Activated naive CD4-positive, alpha-beta T cell treated with anti-CD3 and anti-CD28 coated beads for 36 hours (primary cell): ENCODE measurements at regions of chr9 and their contacts with region 1.

Region 1: GRCh38 chr9:35603987-35604577 is 980 bp upstream of the TESK1 start:
- DNase-seq: peak; percentile 100
- H3K4me3 Mint-ChIP-seq: peak overlapping the region; percentile 98
- H3K27ac Mint-ChIP-seq: peak overlapping the region; percentile 97
- H3K4me1 Mint-ChIP-seq: peaks cover 27% of the 10 kb centered on the region
- H3K27me3 Mint-ChIP-seq: no peaks in the 10 kb centered on the region

Region 2: DNA sequence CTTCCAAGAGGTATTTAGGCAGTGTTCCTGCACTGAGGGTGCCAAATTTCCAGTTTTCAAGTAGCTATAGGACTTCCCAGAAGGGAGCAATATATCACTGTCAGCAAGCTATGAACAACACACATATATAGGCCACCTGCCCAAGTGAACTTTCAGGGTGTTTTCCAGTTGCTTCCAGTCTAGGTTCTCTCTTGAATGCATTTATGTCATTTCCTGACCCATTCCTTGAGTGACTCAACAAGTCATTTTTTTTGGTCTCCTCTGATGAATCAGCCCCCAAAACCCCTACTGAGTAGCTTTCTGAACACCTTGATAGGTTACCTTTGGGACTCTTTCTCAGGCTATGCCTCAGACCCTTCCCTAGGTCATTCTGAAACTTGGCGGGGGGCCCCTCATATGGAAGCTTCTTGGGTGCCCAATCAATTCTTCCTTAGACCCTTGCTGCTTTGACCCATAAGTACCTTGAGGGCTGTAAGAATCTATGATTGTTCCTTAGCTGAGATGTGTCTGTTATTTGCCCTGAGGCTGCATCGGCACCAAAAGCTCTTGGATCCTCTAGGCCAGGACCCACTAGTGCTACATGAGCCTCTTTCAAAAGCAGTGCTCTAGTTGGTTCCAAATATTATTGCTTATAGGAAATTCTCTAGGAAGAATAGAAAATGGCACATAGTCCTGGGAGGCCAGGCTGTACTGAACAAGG is 602.1 kb before region 1 on chr9:
- CTCF ChIA-PET with region 1: no interaction called
- intact Hi-C with region 1: loop called (anchors 1 kb)
- DNase-seq: peak; percentile 70
- H3K4me3 Mint-ChIP-seq: no peak overlapping the region
- H3K27ac Mint-ChIP-seq: peak overlapping the region; percentile 83
- H3K4me1 Mint-ChIP-seq: peaks cover 35% of the 10 kb centered on the region
- H3K27me3 Mint-ChIP-seq: no peaks in the 10 kb centered on the region

Region 3: GRCh38 chr9:35489313-35490154 is 114.5 kb before region 1 on chr9 and contains the start of gene RUSC2:
- CTCF ChIA-PET with region 1: no interaction called
- intact Hi-C with region 1: loop called (anchors 1 kb)
- DNase-seq: peak; percentile 79
- H3K4me3 Mint-ChIP-seq: peak within 1 kb of the TSS; percentile 85
- H3K27ac Mint-ChIP-seq: no peak within 1 kb of the TSS
- H3K4me1 Mint-ChIP-seq: peaks cover 26% of the 10 kb centered on the region
- H3K27me3 Mint-ChIP-seq: no peaks in the 10 kb centered on the region
- total RNA-seq, gene RUSC2: 4.0 to 5.1 TPM

Region 4: GRCh38 chr9:35510745-35511428 is 93.2 kb before region 1 on chr9:
- CTCF ChIA-PET with region 1: no interaction called
- intact Hi-C with region 1: no loop called
- DNase-seq: no peak
- H3K4me3 Mint-ChIP-seq: no peak overlapping the region
- H3K27ac Mint-ChIP-seq: no peak overlapping the region
- H3K4me1 Mint-ChIP-seq: no peaks in the 10 kb centered on the region
- H3K27me3 Mint-ChIP-seq: no peaks in the 10 kb centered on the region

Region 5: GRCh38 chr9:35579130-35579529 is 25.0 kb before region 1 on chr9:
- CTCF ChIA-PET with region 1: interaction called, 5 read pairs
- intact Hi-C with region 1: loop called (anchors 1 kb)
- DNase-seq: peak; percentile 78
- H3K4me3 Mint-ChIP-seq: no peak overlapping the region
- H3K27ac Mint-ChIP-seq: peak overlapping the region; percentile 90
- H3K4me1 Mint-ChIP-seq: peaks cover 15% of the 10 kb centered on the region
- H3K27me3 Mint-ChIP-seq: no peaks in the 10 kb centered on the region

Region 6: DNA sequence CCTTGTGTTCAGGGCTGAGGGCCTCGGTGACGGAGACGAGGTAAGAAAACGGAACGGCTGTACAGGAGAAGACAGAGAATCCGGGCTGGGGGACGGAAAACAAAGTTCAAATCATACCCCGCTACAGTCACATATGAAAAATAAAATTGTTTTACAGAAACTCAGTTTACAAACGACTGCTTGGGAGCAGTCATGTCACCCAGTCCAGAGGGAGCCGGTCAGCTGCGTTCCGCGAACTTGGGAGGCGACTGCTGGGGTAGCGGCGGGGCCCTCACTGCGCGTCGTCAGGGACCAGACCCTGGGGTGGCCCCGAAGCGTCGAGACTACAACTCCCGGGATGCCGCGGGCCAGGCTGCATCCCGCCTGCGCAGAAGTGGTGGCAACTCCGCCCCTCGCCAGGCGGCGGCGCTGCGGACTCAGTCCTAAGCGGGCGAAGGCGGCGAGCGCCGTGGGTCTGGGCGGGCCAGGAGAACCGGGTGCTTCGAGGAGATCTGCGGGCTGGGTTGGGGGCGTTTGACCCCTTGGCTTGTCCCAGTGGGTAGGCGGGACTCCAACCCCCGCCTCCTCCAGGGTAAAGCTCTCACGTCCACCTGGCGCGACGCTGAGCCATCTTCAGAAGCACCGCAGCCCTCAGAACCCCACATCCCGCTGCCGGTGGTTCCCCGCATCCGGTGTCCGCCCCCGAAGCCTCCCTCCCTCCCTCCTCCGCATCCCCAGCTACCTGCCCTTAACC is 42.6 kb after region 1 on chr9:
- CTCF ChIA-PET with region 1: interaction called, 8 read pairs
- intact Hi-C with region 1: loop called (anchors 1 kb)
- DNase-seq: peak; percentile 94
- H3K4me3 Mint-ChIP-seq: peak overlapping the region; percentile 90
- H3K27ac Mint-ChIP-seq: peak overlapping the region; percentile 83
- H3K4me1 Mint-ChIP-seq: peaks cover 43% of the 10 kb centered on the region
- H3K27me3 Mint-ChIP-seq: no peaks in the 10 kb centered on the region

Region 7: GRCh38 chr9:35748858-35749514 is 144.9 kb after region 1 on chr9 and contains the starts of genes GBA2 and RGP1:
- CTCF ChIA-PET with region 1: interaction called, 6 read pairs
- intact Hi-C with region 1: loop called (anchors 1 kb)
- DNase-seq: peak; percentile 67
- H3K4me3 Mint-ChIP-seq: peak within 1 kb of the TSS; percentile 89
- H3K27ac Mint-ChIP-seq: peak within 1 kb of the TSS; percentile 88
- H3K4me1 Mint-ChIP-seq: peaks cover 32% of the 10 kb centered on the region
- H3K27me3 Mint-ChIP-seq: no peaks in the 10 kb centered on the region
- total RNA-seq, gene GBA2: 20.3 to 22.7 TPM
- total RNA-seq, gene RGP1: 12.0 to 13.3 TPM

Region 8: GRCh38 chr9:35882263-35882848 is 278.3 kb after region 1 on chr9:
- CTCF ChIA-PET with region 1: no interaction called
- intact Hi-C with region 1: loop called (anchors 1 kb)
- DNase-seq: peak; percentile 89
- H3K4me3 Mint-ChIP-seq: no peak overlapping the region
- H3K27ac Mint-ChIP-seq: no peak overlapping the region
- H3K4me1 Mint-ChIP-seq: no peaks in the 10 kb centered on the region
- H3K27me3 Mint-ChIP-seq: no peaks in the 10 kb centered on the region